HEK293 (cell line): ENCODE measurements at regions of chr5 and their contacts with region 1.

Region 1: DNA sequence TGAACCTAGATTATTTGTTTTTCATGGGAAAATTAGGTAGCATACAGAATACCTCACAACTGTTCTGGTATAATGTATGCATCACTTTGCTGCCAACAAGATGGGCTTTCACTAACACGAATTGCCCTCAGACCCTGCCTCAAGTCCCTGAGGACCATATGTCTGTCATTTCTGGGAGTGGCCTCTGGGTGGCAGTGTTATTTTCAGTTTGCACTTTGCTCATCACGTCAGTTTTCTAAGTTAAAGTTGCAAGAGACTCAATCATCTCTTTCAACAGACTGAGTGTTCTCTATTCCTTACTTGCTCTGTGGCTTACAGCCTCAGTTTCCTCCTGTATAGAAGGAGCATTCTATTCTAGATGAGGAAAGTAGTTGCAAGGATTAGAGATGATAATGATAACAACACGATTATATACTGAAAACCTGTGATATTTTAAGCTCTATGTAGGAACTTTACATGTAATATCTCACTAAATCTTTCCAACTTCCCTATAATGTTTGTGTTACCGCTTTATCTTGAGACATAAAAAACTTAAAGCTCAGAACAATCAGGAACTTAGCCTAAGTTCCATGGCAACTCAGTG is 55.7 kb downstream of the TSSK1B start:
- H3K4me3 ChIP-seq: no peak overlapping the region
- H3K27ac ChIP-seq: no peak overlapping the region
- H3K4me1 ChIP-seq: no peaks in the 10 kb centered on the region
- CTCF ChIP-seq: 0 out of 2 replicates have a peak, but pooled peaks have one; percentile 28

Region 2: GRCh38 chr5:113336975-113337374 is 42.1 kb before region 1 on chr5:
- CTCF ChIA-PET with region 1: interaction called, 11 read pairs
- POLR2A ChIA-PET with region 1: no interaction called
- H3K4me3 ChIP-seq: no peak overlapping the region
- H3K27ac ChIP-seq: no peak overlapping the region
- H3K4me1 ChIP-seq: no peaks in the 10 kb centered on the region
- CTCF ChIP-seq: peak; percentile 70

Region 3: GRCh38 chr5:113359419-113359818 is 19.6 kb before region 1 on chr5:
- CTCF ChIA-PET with region 1: interaction called, 27 read pairs
- POLR2A ChIA-PET with region 1: no interaction called
- H3K4me3 ChIP-seq: no peak overlapping the region
- H3K27ac ChIP-seq: no peak overlapping the region
- H3K4me1 ChIP-seq: no peaks in the 10 kb centered on the region
- CTCF ChIP-seq: no peak

Region 4: GRCh38 chr5:113390224-113390623 is 11.2 kb after region 1 on chr5:
- CTCF ChIA-PET with region 1: interaction called, 27 read pairs
- POLR2A ChIA-PET with region 1: no interaction called
- H3K4me3 ChIP-seq: no peak overlapping the region
- H3K27ac ChIP-seq: no peak overlapping the region
- H3K4me1 ChIP-seq: no peaks in the 10 kb centered on the region
- CTCF ChIP-seq: no peak

Region 5: DNA sequence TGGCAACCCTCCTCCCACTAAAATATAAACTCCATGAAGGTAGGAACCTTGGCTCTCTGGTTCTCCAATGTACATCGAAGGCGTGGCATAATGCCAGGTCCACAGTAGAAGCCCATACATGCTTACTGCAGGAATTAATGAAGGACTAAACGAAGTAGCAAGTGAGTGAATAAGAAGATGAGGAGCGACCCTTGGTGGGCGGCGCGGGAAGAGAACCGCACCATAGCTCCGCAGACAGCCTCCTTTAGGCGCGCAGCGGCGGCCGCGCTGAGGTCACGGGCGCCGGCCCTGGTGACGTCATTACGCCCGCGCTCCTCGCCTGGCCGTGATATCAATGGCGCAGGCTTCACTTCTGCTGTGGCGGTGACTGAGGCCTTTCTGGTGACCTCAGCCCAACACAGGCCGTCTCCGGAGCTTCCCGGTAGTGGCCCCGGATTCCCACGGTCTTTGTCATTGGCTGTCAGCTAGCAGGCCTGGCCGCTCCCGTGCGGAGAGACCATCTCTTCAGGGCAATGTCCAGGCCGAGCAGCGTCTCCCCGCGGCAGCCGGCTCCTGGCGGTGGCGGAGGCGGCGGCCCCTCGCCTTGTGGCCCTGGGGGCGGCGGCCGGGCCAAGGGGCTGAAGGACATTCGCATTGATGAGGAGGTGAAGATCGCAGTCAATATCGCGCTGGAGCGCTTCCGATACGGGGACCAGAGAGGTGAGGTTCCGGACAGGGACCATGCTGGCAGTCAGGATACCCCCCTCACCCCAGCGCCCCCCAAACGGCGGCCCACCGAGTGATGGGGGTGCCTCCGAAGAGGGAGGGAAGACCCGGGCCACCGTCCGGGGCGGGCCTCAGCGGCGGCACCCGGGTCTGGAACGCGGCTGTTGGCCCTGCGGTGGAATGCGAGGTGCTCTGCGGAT is 134.6 kb after region 1 on chr5 and contains the start of gene YTHDC2:
- CTCF ChIA-PET with region 1: interaction called, 57 read pairs
- POLR2A ChIA-PET with region 1: no interaction called
- H3K4me3 ChIP-seq: peak within 1 kb of the TSS; percentile 94
- H3K27ac ChIP-seq: peak within 1 kb of the TSS; percentile 77
- H3K4me1 ChIP-seq: no peaks in the 10 kb centered on the region
- CTCF ChIP-seq: peak; percentile 87

Region 6: GRCh38 chr5:113524927-113525326 is 145.9 kb after region 1 on chr5:
- CTCF ChIA-PET with region 1: interaction called, 10 read pairs
- POLR2A ChIA-PET with region 1: no interaction called
- H3K4me3 ChIP-seq: no peak overlapping the region
- H3K27ac ChIP-seq: no peak overlapping the region
- H3K4me1 ChIP-seq: no peaks in the 10 kb centered on the region
- CTCF ChIP-seq: no peak

Region 7: DNA sequence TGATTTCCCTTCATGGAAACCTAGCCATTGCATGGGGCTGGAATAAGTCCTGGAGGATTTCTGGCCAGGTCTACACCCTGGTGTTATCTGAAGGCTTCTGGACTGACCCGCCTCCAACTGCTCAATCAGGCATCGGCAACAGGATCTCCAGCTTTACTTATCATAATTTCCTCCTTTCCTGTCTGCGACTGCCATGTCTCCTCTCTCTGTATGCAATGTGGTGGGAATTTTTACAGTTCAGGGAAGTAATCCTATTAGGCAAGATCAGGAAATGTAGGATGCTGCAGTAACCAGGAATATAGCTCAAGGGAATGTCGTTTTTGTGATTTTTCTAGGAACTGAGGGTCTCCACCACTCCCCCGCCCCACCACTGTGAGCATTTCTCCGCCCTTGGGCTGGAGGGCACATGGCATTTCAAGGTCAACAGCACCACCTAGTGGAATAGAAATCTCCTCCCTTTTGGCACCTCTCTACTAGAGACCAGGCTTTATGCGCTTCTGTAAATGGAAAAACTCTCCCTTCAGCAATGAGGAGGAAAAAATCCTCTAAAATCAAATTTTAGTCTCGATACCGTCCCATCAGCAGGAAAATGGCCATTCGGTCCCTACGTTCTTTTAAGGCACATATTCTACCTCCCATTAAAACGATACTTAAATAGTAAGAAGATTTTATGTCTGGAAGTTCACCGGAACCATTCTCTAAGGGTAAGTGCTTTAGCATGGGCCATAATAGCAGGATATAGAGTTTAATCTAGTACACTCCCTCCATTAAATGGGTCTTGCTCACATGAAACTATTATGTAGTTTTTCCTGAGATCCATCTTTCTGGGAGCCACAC is 227.5 kb after region 1 on chr5:
- CTCF ChIA-PET with region 1: interaction called, 21 read pairs
- POLR2A ChIA-PET with region 1: no interaction called
- H3K4me3 ChIP-seq: no peak overlapping the region
- H3K27ac ChIP-seq: no peak overlapping the region
- H3K4me1 ChIP-seq: no peaks in the 10 kb centered on the region; the same call in 1 of the 2 replicates
- CTCF ChIP-seq: peak; percentile 86